Activated T-helper 2 cell treated with anti-CD3 and anti-CD28 coated beads, Interferon-gamma antibody, Interleukin-2, Interleukin-4, amounts not matched to agents 10 μg/mL and 5 μg/mL and 100 μg/mL, durations not matched to agents 14 hours and 24 hours and 36 hours (primary cell): ENCODE measurements at regions of chr3 and their contacts with region 1.

Region 1: GRCh38 chr3:188683032-188683521 is 488.7 kb upstream of the TPRG1 start:
- DNase-seq: no peak
- H3K4me3 Mint-ChIP-seq: no peak overlapping the region
- H3K27ac Mint-ChIP-seq: peak overlapping the region; percentile 78
- H3K4me1 Mint-ChIP-seq: peaks cover 41% of the 10 kb centered on the region
- H3K27me3 Mint-ChIP-seq: no peaks in the 10 kb centered on the region

Region 2: DNA sequence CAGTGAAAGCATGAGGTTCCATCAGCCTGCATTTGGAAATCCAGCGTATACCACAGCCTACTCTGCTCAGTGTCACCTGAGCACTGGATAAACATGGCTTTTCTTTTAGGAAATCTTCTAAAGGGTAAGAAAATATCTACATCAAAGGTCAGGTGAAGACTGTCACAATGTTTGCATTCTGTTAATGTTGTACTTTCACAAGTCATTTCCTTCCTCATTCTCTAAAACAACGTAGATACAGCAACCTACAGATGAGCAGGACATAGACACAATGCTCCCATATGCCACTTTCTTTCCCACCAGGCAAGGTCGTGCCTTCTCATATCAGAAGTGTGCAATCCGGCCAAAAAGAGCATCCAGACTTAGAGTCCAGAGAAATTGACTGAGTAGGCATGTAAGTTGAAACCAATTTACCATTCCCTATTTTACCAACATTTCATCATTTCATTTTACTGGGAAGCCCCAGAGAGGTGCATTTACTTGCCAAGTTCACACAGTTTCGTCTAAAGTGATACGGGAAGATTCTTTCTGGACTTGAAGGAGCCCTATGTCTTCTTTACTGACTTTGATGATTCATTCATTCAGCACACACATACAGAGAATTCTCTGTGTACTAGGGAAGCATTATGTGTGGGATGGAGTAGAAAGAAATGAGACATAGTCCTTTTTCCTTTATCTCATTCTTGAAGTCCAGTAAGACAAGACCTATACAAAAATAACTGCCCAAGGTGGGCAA is 559.7 kb before region 1 on chr3:
- intact Hi-C with region 1: loop called (anchors 1 kb)
- DNase-seq: no peak
- H3K4me3 Mint-ChIP-seq: no peak overlapping the region
- H3K27ac Mint-ChIP-seq: peak overlapping the region; percentile 48
- H3K4me1 Mint-ChIP-seq: peaks cover 19% of the 10 kb centered on the region
- H3K27me3 Mint-ChIP-seq: peaks cover 10% of the 10 kb centered on the region

Region 3: GRCh38 chr3:188320757-188321156 is 362.3 kb before region 1 on chr3:
- intact Hi-C with region 1: loop called (anchors 10 kb)
- DNase-seq: no peak
- H3K4me3 Mint-ChIP-seq: no peak overlapping the region
- H3K27ac Mint-ChIP-seq: no peak overlapping the region
- H3K4me1 Mint-ChIP-seq: peaks cover 50% of the 10 kb centered on the region
- H3K27me3 Mint-ChIP-seq: peaks cover 7% of the 10 kb centered on the region

Region 4: GRCh38 chr3:188697127-188697526 is 14.1 kb after region 1 on chr3:
- intact Hi-C with region 1: loop called (anchors 1 kb)
- DNase-seq: no peak
- H3K4me3 Mint-ChIP-seq: no peak overlapping the region
- H3K27ac Mint-ChIP-seq: no peak overlapping the region
- H3K4me1 Mint-ChIP-seq: peaks cover 30% of the 10 kb centered on the region
- H3K27me3 Mint-ChIP-seq: peaks cover 2% of the 10 kb centered on the region

Region 5: DNA sequence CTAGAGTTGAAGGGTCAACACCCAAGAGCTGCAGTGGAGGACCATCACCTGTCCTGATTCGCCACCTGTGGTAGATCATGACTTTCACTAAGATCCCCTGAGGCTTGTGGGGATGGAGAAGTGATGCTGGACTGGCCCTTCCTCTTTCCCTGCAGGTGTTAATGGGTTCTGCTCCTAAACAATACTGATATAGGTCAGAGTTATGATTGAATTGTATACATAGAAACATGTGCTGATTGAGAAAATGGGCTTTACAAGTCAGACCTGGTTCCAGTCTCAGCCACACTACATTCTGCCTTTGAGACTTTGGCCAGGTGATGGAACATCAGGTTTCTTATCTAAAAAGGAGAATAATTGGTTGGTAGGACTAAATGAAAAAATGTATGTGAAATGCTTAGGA is 69.8 kb after region 1 on chr3:
- intact Hi-C with region 1: loop called (anchors 5 kb)
- DNase-seq: no peak
- H3K4me3 Mint-ChIP-seq: no peak overlapping the region
- H3K27ac Mint-ChIP-seq: no peak overlapping the region
- H3K4me1 Mint-ChIP-seq: peaks cover 19% of the 10 kb centered on the region
- H3K27me3 Mint-ChIP-seq: peaks cover 3% of the 10 kb centered on the region